ENCODE measurements at regions of chr10 and their contacts with region 1.

Region 1: DNA sequence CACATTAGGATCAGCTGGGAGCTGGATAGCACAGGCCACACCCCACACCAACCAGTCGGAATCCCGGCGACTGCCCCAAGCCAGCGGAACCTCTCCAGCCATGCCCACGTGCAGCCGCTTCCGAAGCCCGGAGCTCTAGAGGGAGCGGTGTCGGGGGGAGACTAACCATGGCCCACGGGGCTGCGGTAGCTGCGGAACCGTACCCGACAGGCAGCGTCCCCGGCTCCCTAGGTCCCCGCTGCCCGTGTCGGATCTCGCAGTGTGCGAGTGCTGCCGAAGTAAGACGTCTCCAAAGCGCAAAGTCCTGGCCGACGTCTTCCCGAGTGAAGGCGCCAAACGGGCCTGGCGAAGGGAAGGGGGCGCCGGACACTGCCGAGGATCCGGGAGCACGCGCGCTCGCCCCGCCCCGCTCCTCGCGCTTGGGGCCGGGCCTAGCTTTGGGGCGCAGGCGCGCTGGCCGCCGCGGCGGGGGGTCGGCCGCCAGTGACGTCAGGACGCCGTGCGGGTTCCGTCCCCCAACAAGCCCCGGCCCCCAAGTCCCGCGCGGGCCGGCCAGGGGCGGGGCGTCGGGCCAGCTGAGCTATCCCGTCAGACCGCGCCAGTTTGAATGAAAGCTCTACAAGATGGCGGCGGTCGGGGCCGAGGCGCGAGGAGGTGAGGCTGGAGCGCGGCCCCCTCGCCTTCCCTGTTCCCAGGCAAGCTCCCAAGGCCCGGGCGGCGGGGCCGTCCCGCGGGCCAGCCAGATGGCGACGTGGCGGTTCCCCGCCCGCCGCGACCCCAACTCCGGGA is at the start of gene SUV39H2:
- DNase-seq: peak; percentile 96
- ATAC-seq: peak; percentile 92
- H3K4me3 Mint-ChIP-seq: peak within 1 kb of the TSS; percentile 94
- H3K27ac Mint-ChIP-seq: peak within 1 kb of the TSS; percentile 92
- H3K4me1 Mint-ChIP-seq: peaks cover 48% of the 10 kb centered on the region
- H3K27me3 Mint-ChIP-seq: no peaks in the 10 kb centered on the region
- total RNA-seq, gene SUV39H2: 34.3 to 34.6 TPM

Region 2: GRCh38 chr10:14954001-14954770 is 75.7 kb after region 1 on chr10 and contains the start of gene DCLRE1C:
- CTCF ChIA-PET with region 1: interaction called, 10 read pairs
- POLR2A ChIA-PET with region 1: interaction called, 17 read pairs
- DNase-seq: peak; percentile 96
- ATAC-seq: peak; percentile 96
- H3K4me3 Mint-ChIP-seq: peak within 1 kb of the TSS; percentile 94
- H3K27ac Mint-ChIP-seq: peak within 1 kb of the TSS; percentile 96
- H3K4me1 Mint-ChIP-seq: peaks cover 70% of the 10 kb centered on the region
- H3K27me3 Mint-ChIP-seq: no peaks in the 10 kb centered on the region
- total RNA-seq, gene DCLRE1C: 50.7 to 58.3 TPM

Region 3: DNA sequence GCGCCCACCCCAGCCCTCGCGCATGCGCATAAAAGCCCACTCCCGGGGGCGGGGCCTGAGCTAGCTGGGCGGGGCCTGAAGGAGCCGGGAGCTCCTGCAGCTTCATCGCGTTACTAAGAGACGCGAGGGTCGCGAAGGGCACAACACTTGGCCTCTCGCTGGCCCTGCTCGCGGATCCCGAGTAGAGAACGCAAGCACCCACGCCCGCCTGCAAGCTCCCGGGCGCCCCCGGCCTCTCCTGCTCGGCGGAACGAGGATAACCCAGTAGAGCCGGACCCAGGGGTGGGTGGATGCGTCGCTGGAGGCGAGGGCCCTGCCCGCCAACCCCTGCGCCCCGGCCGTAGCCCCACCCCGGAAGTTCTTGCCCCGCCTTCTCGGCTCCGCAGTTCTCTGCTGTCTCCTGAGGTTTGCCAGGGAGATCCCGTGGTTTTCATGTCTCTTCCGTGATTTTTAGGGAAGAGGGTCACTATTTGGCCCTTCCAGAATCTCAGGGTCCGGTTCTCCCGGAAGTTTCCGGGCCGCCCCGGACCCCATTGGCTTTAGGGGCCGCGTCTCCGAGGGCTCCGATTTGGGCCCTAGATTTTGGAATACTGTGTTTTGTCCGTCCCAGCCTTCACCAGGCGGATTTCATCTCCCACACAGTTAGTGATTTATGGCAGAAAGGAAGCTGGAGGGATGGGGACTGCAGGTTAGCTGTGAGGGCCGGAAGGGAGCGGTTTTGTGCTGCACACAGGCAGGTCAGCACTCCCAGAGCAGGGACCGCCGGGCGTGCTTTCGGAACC is 81.0 kb after region 1 on chr10 and contains the start of gene MEIG1:
- CTCF ChIA-PET with region 1: interaction called, 10 read pairs
- POLR2A ChIA-PET with region 1: interaction called, 17 read pairs
- DNase-seq: peak; percentile 92
- ATAC-seq: peak; percentile 93
- H3K4me3 Mint-ChIP-seq: peak within 1 kb of the TSS; percentile 95
- H3K27ac Mint-ChIP-seq: peak within 1 kb of the TSS; percentile 99
- H3K4me1 Mint-ChIP-seq: peaks cover 44% of the 10 kb centered on the region
- H3K27me3 Mint-ChIP-seq: no peaks in the 10 kb centered on the region
- total RNA-seq, gene MEIG1: not detected